Activated CD4-positive, alpha-beta T cell treated with anti-CD3 and anti-CD28 coated beads, Interleukin-2, amount 10 ng/mL, durations not matched to agents 7 days and 5 days (primary cell): ENCODE measurements at regions of chr10 and their contacts with region 1.

Region 1: DNA sequence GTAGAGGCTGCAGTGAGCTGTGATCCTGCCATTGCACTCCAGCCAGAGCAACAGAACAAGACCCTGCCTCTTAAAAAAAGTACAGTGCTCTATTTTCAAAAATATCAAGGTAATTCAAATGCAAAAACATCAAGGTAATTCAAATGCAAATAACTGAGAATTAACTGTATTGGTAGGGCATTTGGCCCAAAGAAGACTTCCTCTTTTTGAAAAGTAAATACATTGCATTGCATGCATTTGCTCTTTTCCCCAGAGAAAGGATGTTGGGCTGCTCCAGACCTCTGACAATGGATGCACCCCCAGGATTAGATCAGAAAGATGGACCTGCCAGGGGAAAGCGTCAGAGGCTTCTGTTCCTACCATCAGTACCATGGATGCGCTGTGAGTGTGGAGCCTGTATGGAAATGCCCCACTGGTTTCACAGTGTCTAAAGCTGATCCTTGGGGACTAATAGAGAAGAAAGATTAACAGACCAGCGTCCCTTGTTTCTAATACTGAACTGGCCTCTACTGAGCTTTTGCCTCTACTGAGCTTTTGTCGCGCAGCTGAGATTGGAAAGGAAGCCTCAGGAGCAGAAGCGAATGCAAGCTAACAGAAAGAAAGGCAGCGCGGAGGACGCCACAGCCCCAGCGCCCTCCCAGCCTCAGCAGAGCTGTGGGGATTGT is 93.5 kb upstream of the LYZL2 start:
- DNase-seq: no peak
- H3K4me3 Mint-ChIP-seq: no peak overlapping the region
- H3K27ac Mint-ChIP-seq: no peak overlapping the region
- H3K4me1 Mint-ChIP-seq: peaks cover 13% of the 10 kb centered on the region
- H3K27me3 Mint-ChIP-seq: no peaks in the 10 kb centered on the region

Region 2: GRCh38 chr10:30383356-30383755 is 339.7 kb before region 1 on chr10:
- CTCF ChIA-PET with region 1: no interaction called
- POLR2A ChIA-PET with region 1: interaction called, 13 read pairs
- DNase-seq: no peak
- H3K4me3 Mint-ChIP-seq: no peak overlapping the region
- H3K27ac Mint-ChIP-seq: no peak overlapping the region
- H3K4me1 Mint-ChIP-seq: peaks cover 2% of the 10 kb centered on the region
- H3K27me3 Mint-ChIP-seq: peaks cover 19% of the 10 kb centered on the region

Region 3: GRCh38 chr10:30639946-30640786 is 82.9 kb before region 1 on chr10:
- CTCF ChIA-PET with region 1: interaction called, 10 read pairs
- POLR2A ChIA-PET with region 1: no interaction called
- DNase-seq: peak; percentile 27
- H3K4me3 Mint-ChIP-seq: no peak overlapping the region
- H3K27ac Mint-ChIP-seq: no peak overlapping the region
- H3K4me1 Mint-ChIP-seq: peaks cover 1% of the 10 kb centered on the region
- H3K27me3 Mint-ChIP-seq: peaks cover 20% of the 10 kb centered on the region

Region 4: DNA sequence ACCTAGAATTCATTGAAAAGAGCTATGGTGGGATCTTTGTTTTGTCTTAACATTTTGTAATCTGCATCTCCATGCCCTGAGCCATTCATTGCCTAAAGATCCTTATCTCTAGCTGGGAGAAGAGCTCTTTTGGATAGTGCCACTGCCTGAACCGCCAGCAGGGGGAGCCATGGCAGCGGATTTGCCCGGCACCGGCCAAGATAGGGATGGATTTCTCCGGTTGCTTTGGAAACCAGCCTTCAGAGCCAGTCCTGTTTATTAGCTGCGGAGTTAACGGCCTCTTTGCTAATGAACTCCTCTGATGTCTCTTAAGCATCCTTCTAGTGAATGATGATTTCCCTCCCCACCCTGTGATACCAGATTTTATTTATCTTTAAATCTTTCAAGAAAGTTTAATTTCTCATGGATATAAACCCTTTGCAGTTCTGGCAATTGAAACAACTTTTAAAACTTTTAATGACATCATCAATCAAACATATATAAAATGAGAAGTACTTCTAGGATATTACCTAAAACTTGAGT is 35.3 kb before region 1 on chr10:
- CTCF ChIA-PET with region 1: interaction called, 11 read pairs
- POLR2A ChIA-PET with region 1: no interaction called
- DNase-seq: peak; percentile 81
- H3K4me3 Mint-ChIP-seq: no peak overlapping the region
- H3K27ac Mint-ChIP-seq: peak overlapping the region; percentile 1
- H3K4me1 Mint-ChIP-seq: peaks cover 44% of the 10 kb centered on the region
- H3K27me3 Mint-ChIP-seq: no peaks in the 10 kb centered on the region

Region 5: DNA sequence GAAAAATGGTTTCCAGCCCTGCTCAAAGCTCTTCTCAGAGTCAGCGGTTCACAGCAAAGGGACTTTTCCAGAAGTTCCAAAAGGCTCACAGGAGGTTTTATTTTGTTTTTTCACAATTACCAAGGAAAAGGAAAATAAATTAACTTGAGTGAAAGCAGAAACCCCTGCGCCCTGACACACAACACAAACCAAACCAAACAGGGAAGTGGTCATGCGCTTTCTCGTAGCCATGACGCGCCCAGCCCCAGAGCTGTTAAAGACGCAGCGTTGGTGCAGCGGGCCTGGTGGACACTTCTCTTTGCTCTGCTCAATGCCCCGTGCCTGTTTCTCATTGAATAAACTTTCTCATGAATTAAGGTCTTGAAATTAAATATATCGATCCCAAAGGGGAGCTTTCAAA is 40.8 kb after region 1 on chr10:
- CTCF ChIA-PET with region 1: no interaction called
- POLR2A ChIA-PET with region 1: no interaction called
- DNase-seq: no peak
- H3K4me3 Mint-ChIP-seq: no peak overlapping the region
- H3K27ac Mint-ChIP-seq: no peak overlapping the region
- H3K4me1 Mint-ChIP-seq: peaks cover 9% of the 10 kb centered on the region
- H3K27me3 Mint-ChIP-seq: no peaks in the 10 kb centered on the region